ENCODE measurements at regions of chrX and their contacts with region 1.

Region 1: DNA sequence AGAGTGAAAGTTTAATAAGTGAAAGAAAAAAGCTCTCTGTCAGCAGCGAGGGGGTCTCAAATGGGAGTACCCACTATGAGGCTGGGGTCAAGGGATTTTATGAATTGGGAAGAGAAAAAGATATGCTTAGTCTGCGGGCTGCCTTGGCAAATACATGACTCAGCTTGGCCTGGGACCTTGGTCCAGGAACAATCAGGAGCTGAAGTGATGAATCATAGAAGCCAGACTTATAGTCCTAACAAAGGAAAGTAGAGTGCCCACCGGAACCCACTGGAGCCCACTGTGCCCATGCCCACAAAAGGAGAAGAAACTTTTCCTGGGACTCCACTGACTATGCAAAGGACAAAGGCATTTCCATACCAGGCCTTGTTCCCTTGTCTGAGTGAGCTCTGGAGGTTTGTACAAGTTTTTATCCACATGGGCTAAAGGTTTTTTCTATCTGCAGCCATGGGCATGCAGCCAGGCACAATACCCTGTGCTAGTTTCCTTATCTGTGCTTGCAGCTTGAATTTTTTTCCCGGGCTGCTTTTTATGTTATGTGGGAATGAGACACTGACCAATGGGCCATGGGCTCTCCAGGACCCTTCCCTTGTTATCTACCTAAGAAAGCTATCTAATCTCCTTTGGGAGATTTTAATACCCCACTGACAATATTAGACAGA is 201.7 kb downstream of the FAM133A start:
- DNase-seq: no peak
- H3K4me3 ChIP-seq: no peak overlapping the region
- H3K27ac ChIP-seq: no peak overlapping the region
- H3K4me1 ChIP-seq: no peaks in the 10 kb centered on the region
- H3K27me3 ChIP-seq: peaks cover 4% of the 10 kb centered on the region
- CTCF ChIP-seq: no peak

Region 2: GRCh38 chrX:94058728-94059382 is 183.1 kb after region 1 on chrX:
- intact Hi-C with region 1: loop called (anchors 5 kb)
- DNase-seq: peak; percentile 18
- H3K4me3 ChIP-seq: no peak overlapping the region
- H3K27ac ChIP-seq: no peak overlapping the region
- H3K4me1 ChIP-seq: no peaks in the 10 kb centered on the region
- H3K27me3 ChIP-seq: no peaks in the 10 kb centered on the region
- CTCF ChIP-seq: peak; percentile 43

Measured in colonic mucosa (tissue), 4 donors.